Sigmoid colon (tissue), 7 donors: ENCODE measurements at regions of chr17 and their contacts with region 1.

Region 1: DNA sequence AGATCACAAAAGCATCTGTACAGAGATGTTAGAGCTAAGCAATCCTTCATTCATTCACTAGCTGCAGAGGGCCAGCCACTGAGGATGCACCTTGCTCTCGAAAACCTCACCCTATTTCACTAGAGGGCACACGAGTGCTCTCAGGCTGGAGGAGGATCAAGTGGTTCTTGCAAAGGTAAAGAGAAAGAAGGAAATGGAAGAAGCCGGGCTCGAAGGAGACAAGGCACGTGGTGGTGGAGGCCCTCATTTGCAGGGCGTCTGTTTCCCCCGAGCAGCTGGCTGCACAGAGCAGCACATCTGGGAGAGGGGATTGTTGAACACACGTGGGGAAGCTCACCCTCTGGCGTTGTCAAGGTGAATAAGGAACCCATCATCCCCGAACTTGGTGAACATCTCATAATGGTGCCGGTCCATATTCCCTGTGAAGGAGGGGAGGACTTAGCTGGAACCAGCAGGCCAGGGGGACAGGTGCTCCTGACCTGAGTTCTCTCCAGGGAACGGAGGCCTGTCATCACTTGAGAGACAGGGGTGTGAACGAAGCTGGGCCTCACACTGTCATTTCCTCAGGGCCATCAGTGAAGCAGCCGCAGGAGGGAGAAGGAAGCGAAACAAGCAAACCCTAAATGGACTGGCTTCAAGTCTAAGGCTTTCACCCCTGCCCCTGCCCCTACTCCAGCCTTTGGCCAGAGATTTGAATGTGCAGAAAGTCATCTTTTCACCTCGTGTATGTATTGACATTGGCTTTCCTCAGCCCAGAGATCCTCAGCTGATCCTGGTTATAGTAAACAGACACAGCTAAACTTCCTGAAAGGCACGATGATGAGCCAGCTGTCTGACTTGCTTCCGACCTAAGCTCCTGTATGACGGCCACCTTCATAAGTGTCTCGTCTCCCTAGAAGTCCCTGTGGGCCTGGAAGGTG is 27.6 kb downstream of the PRKAR1A start:
- DNase-seq: no peak
- H3K4me3 ChIP-seq: no peak overlapping the region
- H3K27ac ChIP-seq: no peak overlapping the region
- H3K4me1 ChIP-seq: no peaks in the 10 kb centered on the region
- H3K27me3 ChIP-seq: no peaks in the 10 kb centered on the region
- CTCF ChIP-seq: no peak
- EP300 ChIP-seq: no peak
- POLR2A ChIP-seq: no peak

Region 2: GRCh38 chr17:68740555-68741447 is 201.0 kb after region 1 on chr17:
- intact Hi-C with region 1: no loop called
- DNase-seq: no peak
- H3K4me3 ChIP-seq: no peak overlapping the region
- H3K27ac ChIP-seq: no peak overlapping the region
- H3K4me1 ChIP-seq: no peaks in the 10 kb centered on the region
- H3K27me3 ChIP-seq: no peaks in the 10 kb centered on the region
- CTCF ChIP-seq: no peak
- EP300 ChIP-seq: no peak
- POLR2A ChIP-seq: no peak

Region 3: GRCh38 chr17:68759343-68760132 is 219.7 kb after region 1 on chr17:
- intact Hi-C with region 1: loop called (anchors 5 kb)
- DNase-seq: peak; percentile 94
- H3K4me3 ChIP-seq: peak overlapping the region in 3 of 4 donors; percentile 27 to 40 (median 28)
- H3K27ac ChIP-seq: peak overlapping the region; percentile 59 to 75 (median 64)
- H3K4me1 ChIP-seq: peaks cover 0 to 11% (median 3%) of the 10 kb centered on the region in 4 donors
- H3K27me3 ChIP-seq: no peaks in the 10 kb centered on the region
- CTCF ChIP-seq: peak; percentile 61 to 85 (median 76)
- EP300 ChIP-seq: no peak
- POLR2A ChIP-seq: no peak